ENCODE measurements at regions of chr15 and their contacts with region 1.

Region 1: DNA sequence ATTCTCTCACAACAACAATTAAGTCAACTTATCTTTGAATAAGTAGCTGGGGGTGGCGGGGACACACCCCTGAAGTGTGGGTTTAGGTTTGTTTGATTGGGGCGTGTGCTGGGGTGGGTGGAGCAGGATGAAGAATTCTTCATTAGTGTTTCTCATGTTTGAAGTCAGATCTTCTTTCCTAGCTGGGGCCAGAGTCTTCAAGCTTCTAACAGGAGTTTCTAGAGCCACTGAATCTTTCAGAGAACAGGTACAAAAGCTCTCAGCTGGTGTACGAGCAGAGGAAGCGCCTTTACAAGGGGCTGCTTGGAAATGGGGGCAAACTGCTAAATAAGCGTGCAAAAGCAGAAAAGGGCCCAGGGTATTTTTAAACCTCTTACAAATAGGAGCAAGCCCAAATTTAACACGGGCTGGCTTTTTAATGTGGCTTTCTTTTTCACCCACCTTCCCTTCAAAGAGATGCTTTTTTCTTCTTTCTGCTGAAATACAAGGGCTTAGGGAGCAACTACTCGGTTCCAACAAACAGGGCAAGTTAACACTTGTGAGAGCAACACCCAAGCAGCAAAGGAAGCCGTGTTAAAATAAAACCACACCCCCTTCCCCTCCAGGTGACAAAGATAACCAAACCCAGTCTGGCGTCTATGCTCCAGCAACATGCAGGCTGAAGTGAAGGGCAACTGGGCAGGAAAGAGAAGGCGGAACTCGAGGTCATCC is 86.9 kb upstream of the RASGRP1 start:
- DNase-seq: peak; percentile 81
- H3K4me3 Mint-ChIP-seq: peak overlapping the region; percentile 77
- H3K27ac Mint-ChIP-seq: peak overlapping the region; percentile 97
- H3K4me1 Mint-ChIP-seq: peaks cover 89% of the 10 kb centered on the region
- H3K27me3 Mint-ChIP-seq: no peaks in the 10 kb centered on the region

Region 2: DNA sequence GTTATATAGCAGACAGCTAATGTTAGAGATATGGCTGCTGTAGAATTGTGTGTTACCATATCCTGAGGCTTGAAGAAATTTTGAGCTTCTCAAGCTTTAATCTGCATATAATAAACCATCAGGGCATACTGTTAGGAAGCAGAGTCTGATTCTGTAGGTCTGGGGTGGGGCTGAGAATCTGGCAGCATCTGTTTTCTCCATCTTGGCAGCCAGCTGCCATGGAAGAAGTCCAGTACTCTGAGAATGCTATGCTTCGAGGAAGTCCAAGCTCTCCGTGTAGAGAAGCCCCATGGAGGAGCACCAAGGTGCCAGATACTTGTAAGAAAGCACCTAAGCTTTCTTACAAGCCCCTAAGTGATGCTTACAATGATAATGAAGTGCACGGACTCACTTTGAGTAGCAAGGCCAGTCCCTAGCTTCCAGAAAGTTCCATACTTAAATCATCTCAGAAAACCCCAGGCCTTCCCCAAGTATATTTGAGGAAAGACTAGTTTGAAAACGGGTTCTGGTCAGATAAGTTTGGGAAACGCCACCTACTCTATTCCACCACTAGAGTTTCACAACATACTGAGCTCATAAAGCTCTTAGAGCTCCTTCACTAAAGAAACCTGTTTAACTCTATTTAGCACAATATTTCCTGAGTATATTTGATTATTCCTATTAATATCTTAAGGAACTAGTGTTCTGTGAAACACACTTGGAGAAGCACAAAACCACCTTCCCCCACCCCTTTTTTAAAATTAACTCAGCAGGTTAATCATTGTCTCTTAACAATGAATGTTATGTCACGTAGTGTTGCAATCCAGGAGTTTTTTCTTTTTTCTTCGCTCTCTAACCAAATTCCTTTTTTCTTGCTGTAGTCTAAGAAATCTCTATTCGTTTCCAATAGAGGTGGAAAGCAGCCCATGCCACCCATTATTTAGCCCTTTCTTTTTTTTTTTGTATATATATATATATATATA is 27.0 kb before region 1 on chr15:
- CTCF ChIA-PET with region 1: interaction called, 24 read pairs
- POLR2A ChIA-PET with region 1: no interaction called
- DNase-seq: no peak
- H3K4me3 Mint-ChIP-seq: no peak overlapping the region
- H3K27ac Mint-ChIP-seq: no peak overlapping the region
- H3K4me1 Mint-ChIP-seq: peaks cover 41% of the 10 kb centered on the region
- H3K27me3 Mint-ChIP-seq: no peaks in the 10 kb centered on the region